ENCODE measurements at regions of chr2 and their contacts with region 1.

Region 1: DNA sequence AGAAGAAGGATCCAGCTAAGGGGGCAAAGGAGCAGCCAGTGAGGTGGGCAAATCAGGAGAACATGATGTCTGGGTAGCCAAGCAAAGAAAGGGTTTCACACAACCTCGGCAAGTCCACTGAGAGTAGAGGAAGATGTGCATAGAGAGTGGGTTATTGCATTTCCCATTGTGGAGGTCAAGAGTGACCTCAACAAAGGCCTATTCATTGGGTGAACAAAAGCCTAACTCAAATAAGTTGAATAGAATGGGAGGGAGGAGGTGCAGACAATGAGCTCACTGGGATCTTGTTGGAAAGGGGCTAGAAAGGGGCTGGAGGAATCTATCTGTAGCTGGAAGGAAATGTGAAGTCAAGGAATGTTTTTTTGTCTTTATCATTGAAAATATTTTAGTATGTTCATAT is 14.0 kb upstream of the PDCL3 start:
- DNase-seq: peak in 2 of 10 donors; percentile 31 to 33
- H3K4me3 ChIP-seq: peak overlapping the region in 4 of 59 donors; percentile 6 to 32 (median 24)
- H3K27ac ChIP-seq: peak overlapping the region; percentile 33 to 98 (median 91)
- H3K27me3 ChIP-seq: no peaks in the 10 kb centered on the region
- CTCF ChIP-seq: peak in 6 of 56 donors; percentile 9 to 36 (median 13)

Region 2: GRCh38 chr2:100562732-100563720 is 14.3 kb after region 1 on chr2 and contains the start of gene PDCL3:
- intact Hi-C with region 1: loop called in 1 of 2 experiments (anchors 2 kb)
- DNase-seq: peak; percentile 81 to 97 (median 94)
- H3K4me3 ChIP-seq: peak within 1 kb of the TSS; percentile 63 to 99 (median 87)
- H3K27ac ChIP-seq: peak within 1 kb of the TSS; percentile 78 to 99 (median 96)
- H3K27me3 ChIP-seq: no peaks in the 10 kb centered on the region
- CTCF ChIP-seq: peak in 50 of 56 donors; percentile 3 to 72 (median 40)
- total RNA-seq, gene PDCL3: 9.0 to 26.2 (median 16.6) TPM